PC-3 (cell line): ENCODE measurements at regions of chr5 and their contacts with region 1.

Region 1: GRCh38 chr5:14727428-14727865 is 62.9 kb downstream of the OTULIN start:
- DNase-seq: peak; percentile 92
- ATAC-seq: peak; percentile 81
- H3K4me3 ChIP-seq: no peak overlapping the region
- H3K27ac ChIP-seq: no peak overlapping the region
- H3K4me1 ChIP-seq: peaks cover 10% of the 10 kb centered on the region
- H3K27me3 ChIP-seq: no peaks in the 10 kb centered on the region
- CTCF ChIP-seq: peak; percentile 99

Region 2: GRCh38 chr5:14767735-14768507 is 40.5 kb after region 1 on chr5:
- CTCF ChIA-PET with region 1: no interaction called
- POLR2A ChIA-PET with region 1: no interaction called
- intact Hi-C with region 1: loop called (anchors 1 kb)
- DNase-seq: peak; percentile 94
- ATAC-seq: peak; percentile 99
- H3K4me3 ChIP-seq: no peak overlapping the region
- H3K27ac ChIP-seq: peak overlapping the region; percentile 61
- H3K4me1 ChIP-seq: peaks cover 14% of the 10 kb centered on the region
- H3K27me3 ChIP-seq: no peaks in the 10 kb centered on the region
- CTCF ChIP-seq: no peak

Region 3: DNA sequence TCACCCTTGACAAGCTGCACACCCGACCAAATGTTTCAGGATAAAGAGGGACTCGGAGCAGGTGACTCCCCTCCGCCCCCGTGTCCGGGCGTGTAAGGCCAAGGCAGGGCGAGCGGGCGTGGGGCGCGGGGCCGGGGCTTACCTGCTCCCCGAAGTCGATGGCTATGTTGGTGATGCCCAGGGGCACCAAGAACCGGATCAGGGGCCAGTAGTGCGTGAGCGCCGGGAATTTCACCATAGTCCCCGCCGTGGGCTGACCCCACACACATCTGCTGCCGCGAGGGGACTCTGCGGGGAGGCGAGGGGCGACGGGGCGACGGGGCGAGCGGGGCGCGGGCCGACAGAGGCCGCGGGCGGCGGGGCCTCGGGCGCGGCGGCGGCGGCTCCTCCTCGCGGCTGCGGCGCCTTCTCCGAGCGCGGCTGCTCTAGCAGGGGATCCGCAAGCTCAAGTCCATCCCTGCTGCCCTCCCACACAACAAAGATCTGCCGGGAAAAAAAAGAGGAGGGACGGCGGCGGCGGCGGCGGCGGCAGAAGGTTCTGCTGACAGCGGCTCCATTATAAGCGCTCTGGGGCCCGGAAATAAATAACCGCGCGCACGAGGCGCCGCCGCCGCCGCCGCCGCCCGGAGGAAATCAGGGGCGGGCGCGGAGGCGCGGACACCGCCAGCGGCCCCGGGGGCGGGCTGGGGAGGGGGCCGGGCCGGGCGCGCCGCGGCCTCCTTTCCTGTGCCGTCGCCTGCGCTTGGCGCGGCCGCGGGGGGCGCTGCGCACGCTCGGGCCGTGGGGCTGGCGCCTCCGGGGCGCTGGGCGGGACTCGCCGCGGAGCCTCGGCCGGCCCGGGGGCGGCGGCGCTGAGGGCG is 144.0 kb after region 1 on chr5 and contains the start of gene ANKH:
- CTCF ChIA-PET with region 1: no interaction called
- POLR2A ChIA-PET with region 1: no interaction called
- intact Hi-C with region 1: loop called (anchors 5 kb)
- DNase-seq: peak; percentile 83
- ATAC-seq: peak; percentile 87
- H3K4me3 ChIP-seq: peak within 1 kb of the TSS; percentile 78
- H3K27ac ChIP-seq: no peak within 1 kb of the TSS
- H3K4me1 ChIP-seq: peaks cover 20% of the 10 kb centered on the region
- H3K27me3 ChIP-seq: peaks cover 40% of the 10 kb centered on the region
- CTCF ChIP-seq: no peak
- total RNA-seq, gene ANKH: 10.9 and 11.6 TPM in 2 replicates

Region 4: DNA sequence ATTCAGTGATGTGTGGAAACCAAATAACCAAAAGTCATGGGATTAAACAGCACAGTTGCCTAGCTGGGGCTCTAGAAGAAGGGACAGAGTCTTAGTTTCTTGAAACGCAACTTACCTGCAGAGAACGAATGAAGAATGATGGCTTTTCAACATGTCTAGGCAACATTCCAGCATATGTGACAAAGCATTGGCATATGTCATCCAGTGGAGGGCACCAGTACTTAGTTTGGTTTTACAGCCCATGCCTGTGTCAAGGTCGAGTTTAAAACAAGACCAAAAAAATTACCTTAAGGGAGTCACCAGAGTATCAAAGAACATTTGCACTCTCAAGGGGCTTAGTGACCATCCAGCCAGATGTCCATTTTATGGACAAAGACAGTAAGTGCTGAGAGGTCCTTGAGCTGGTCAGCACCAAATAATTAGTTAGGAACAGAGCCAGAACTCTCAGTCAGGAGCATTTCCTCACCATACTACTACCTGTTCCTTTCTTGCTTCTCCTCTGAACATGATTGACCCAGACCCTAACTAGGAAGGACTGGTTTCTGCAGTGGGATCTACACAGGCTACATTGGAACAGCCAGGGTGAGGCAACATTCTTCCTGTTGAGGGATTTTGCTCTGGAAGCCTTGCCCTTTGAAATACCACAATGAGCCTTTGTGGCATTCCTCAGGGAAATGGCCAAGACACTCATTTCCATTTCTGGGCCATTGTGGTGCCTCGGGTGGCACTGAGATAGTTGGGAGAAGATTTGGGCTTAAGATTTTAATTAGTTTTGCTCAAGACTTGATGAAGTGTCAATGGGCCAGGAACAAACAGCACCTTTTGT is 219.6 kb after region 1 on chr5:
- CTCF ChIA-PET with region 1: no interaction called
- POLR2A ChIA-PET with region 1: no interaction called
- intact Hi-C with region 1: loop called (anchors 1 kb)
- DNase-seq: peak; percentile 75
- ATAC-seq: no peak
- H3K4me3 ChIP-seq: no peak overlapping the region
- H3K27ac ChIP-seq: no peak overlapping the region
- H3K4me1 ChIP-seq: peaks cover 4% of the 10 kb centered on the region
- H3K27me3 ChIP-seq: peaks cover 7% of the 10 kb centered on the region; the same call in 1 of the 2 replicates
- CTCF ChIP-seq: peak; percentile 77